Right ventricle myocardium inferior (tissue), 1 donor: ENCODE measurements at regions of chr13 and their contacts with region 1.

Region 1: DNA sequence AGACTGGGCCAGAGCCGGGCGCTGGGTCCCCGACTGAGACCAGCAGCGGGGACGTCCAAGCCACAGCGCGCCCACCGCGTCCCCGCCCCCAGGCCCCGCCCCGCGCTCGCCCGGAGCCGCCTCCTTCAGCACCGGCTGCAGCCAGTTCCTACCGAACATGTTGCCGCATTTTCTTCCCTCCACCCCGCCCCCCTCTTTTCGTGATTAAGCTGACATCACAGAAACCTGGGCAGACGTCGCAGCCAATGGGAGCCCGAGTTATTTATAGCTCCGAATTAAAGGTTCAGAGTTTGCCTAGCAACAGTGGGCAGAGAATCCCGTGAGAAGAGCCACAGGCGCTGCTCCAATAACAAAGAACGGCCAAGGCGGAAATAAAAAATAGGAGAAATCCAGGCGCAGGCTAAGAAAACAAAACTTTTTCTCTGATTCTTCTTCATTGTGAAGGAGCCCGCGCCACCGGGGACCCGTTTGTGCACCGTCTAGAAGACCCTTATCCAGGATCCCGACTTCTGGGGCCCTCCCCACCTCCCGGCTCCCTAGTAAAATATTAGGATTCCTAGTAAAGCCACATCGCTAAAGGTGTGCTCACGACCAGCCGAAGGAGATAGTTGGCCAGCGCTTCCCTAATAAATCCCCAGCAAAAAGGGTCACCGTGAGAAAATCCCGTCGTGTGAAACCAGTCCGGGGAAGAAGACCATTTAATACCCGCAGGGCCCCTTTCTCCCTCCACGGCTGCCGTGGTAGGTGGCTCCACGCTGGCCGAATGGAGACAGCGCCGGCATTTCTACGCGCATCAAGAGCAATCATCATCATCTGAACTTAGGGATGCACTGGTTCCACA is 61.7 kb downstream of the SERP2 start:
- DNase-seq: peak; percentile 93
- ATAC-seq: peak; percentile 75

Region 2: GRCh38 chr13:43986421-43986981 is 448.9 kb before region 1 on chr13:
- intact Hi-C with region 1: loop called (anchors 1 kb)
- DNase-seq: no peak
- ATAC-seq: peak; percentile 89

Region 3: DNA sequence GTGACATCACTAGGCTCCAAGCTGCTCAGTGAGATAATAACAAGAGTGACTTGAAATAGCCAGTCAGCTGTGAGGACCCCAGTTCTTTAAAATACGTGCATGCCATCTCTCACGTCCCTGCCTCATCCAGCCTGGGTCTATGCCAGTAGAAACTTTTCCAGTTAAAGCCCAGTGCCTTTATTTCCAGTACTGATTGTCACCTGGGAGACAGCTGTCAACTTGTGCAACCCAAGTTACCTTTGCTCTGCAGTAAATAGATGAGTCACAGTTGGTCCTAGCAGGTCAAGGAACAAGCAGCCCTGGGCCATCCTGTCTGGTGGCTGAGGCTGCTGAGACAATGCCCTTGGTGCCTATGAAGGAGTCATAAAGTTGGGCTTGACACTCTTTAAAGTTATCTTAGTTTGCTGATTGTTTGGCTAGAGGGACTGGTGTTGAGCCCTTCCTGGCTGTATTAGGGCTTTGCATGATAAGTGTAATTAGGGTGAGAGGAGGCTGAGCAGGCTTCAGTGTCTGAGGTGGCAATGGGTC is 327.0 kb before region 1 on chr13:
- intact Hi-C with region 1: loop called (anchors 1 kb)
- DNase-seq: peak; percentile 69
- ATAC-seq: peak; percentile 88

Region 4: GRCh38 chr13:44191504-44192171 is 243.7 kb before region 1 on chr13:
- intact Hi-C with region 1: loop called (anchors 2 kb)
- DNase-seq: no peak
- ATAC-seq: peak; percentile 93

Region 5: DNA sequence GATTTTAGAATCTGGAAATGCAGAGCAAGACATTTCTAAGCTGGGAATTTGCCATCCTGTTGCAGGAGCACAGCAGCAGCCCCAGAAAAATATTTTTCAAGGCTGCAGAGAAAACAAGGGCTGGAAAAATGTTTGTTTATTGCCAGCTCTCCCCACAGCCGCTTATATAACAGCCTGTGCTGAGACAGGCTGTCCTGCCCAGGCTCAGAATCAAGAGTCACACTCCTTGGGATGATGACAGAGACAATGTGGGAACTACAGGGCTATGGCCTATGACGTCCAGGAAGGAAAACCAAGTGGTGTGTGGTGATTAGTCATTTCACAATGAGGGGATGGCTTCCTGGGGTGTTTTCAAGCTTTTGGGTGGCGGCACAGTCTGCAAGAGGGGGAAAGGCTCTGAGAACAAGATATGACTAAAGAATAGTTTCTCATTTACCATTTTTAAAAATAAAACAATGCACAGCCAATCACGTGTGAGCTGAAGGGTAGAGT is 198.0 kb before region 1 on chr13:
- intact Hi-C with region 1: loop called (anchors 1 kb)
- DNase-seq: no peak
- ATAC-seq: peak; percentile 98

Region 6: GRCh38 chr13:44380404-44381165 is 54.8 kb before region 1 on chr13:
- intact Hi-C with region 1: loop called (anchors 5 kb)
- DNase-seq: no peak
- ATAC-seq: no peak